AG04450 (cell line): ENCODE measurements at regions of chr19 and their contacts with region 1.

Region 1: DNA sequence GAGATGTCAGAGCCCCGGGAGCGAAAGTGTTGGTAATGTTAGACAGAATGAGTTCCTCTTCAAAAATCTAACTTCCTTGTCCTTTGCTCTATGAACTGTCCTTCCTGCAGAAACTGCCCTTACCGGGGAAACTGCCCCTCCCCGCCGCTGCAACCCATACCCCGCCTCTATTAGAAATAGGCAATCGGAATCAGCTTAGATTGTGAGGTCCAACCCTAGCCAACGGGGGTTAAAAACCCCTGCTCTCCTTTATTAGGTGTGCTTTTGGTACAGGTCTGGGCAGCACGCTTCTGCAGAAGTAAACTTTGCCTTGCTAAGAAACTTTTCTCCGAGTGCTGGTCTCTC is 11.5 kb upstream of the CAPNS1 start:
- DNase-seq: no peak
- H3K4me3 ChIP-seq: peak overlapping the region; percentile 58
- H3K27ac ChIP-seq: peak overlapping the region; percentile 82
- H3K27me3 ChIP-seq: no peaks in the 10 kb centered on the region
- CTCF ChIP-seq: no peak

Region 2: DNA sequence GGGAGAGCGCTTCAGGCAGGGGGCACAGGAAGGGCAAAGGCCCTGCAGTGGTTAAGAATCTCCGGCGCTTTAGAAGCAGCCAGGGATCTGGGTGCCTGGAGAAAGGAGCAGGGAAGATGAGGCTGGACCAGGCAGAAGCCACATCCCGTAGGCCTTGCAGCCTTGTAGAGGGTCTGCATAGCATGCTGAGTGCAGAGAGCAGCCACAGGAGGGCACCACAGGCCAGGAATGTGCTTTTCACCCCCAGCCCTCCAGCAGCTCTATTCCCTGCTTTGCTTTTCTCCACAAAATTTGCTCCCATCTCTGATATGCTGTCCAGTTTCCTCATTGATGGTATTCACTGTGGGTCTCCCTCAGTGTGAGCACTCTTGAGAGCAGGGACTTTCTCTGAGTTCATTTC is 67.9 kb before region 1 on chr19:
- CTCF ChIA-PET with region 1: interaction called, 12 read pairs
- POLR2A ChIA-PET with region 1: no interaction called
- DNase-seq: peak; percentile 29
- H3K4me3 ChIP-seq: no peak overlapping the region
- H3K27ac ChIP-seq: no peak overlapping the region
- H3K27me3 ChIP-seq: no peaks in the 10 kb centered on the region
- CTCF ChIP-seq: peak; percentile 80

Region 3: DNA sequence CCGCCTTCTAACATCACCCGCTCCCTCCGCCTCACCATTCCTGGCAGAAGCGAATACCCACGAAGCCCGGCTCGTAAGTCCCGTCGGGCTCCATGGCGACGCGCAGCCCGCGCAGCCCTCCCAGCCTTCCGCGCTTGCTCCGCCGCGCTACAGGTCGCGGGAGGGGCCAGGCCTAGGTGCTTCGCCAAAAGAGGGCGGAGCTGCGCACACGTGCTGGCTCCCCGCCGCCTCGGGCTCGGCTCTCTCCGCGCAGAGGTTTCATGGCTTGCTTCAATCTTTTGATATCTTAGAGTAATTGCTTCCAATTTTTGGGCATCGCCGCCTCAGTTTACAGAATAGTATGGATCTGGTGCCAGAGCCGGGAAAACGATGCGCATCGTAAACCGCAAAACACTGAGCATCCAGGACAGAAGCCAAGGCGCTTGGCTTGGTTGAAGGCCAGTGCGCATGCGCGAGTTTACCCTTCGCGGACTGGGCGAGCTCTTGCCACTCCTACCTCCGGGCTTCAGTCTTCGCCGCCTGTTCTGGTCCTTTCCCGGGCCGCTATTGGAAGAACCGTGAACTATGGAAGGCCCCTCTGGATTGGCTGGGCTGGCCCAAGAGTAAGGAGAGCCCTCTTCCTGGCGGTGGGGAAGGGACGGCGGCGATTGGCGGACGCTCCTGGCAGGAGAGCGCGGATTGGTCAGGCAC is 13.5 kb before region 1 on chr19 and contains the start of gene POLR2I:
- CTCF ChIA-PET with region 1: interaction called, 7 read pairs
- POLR2A ChIA-PET with region 1: interaction called, 25 read pairs
- DNase-seq: peak; percentile 99
- H3K4me3 ChIP-seq: peak within 1 kb of the TSS; percentile 96
- H3K27ac ChIP-seq: peak within 1 kb of the TSS; percentile 78
- H3K27me3 ChIP-seq: no peaks in the 10 kb centered on the region
- CTCF ChIP-seq: no peak
- polyA plus RNA-seq, gene POLR2I: 37.7 and 62.9 TPM in 2 replicates

Region 4: GRCh38 chr19:36139473-36140303 is 11.3 kb after region 1 on chr19 and contains the start of gene CAPNS1:
- CTCF ChIA-PET with region 1: interaction called, 15 read pairs
- POLR2A ChIA-PET with region 1: interaction called, 21 read pairs
- DNase-seq: peak; percentile 86
- H3K4me3 ChIP-seq: peak within 1 kb of the TSS; percentile 90
- H3K27ac ChIP-seq: peak within 1 kb of the TSS; percentile 96
- H3K27me3 ChIP-seq: peaks cover 2% of the 10 kb centered on the region
- CTCF ChIP-seq: no peak
- polyA plus RNA-seq, gene CAPNS1: 895 and 966 TPM in 2 replicates

Region 5: DNA sequence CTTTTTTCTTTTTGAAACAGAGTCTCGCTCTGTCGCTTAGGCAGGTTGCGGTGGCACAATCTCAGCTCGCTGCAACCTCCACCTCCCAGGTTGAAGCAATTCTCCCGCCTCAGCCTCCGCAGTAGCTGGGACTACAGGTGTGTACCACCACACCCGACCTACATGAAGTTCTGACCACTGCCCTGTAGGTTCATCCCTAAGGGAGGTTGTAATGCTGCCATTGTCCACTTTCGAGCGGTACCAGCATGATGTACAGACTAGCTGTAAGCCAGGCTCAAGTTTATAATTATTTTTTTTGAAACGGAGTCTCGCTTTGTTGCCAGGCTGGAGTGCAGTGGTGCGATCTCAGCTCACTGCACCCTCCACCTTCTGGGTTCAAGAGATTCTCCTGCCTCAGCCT is 35.4 kb after region 1 on chr19:
- CTCF ChIA-PET with region 1: interaction called, 52 read pairs
- POLR2A ChIA-PET with region 1: interaction called, 10 read pairs
- DNase-seq: no peak
- H3K4me3 ChIP-seq: no peak overlapping the region
- H3K27ac ChIP-seq: no peak overlapping the region
- H3K27me3 ChIP-seq: no peaks in the 10 kb centered on the region
- CTCF ChIP-seq: no peak

Region 6: GRCh38 chr19:36169084-36169760 is 40.9 kb after region 1 on chr19:
- CTCF ChIA-PET with region 1: interaction called, 52 read pairs
- POLR2A ChIA-PET with region 1: interaction called, 8 read pairs
- DNase-seq: no peak
- H3K4me3 ChIP-seq: no peak overlapping the region
- H3K27ac ChIP-seq: no peak overlapping the region
- H3K27me3 ChIP-seq: no peaks in the 10 kb centered on the region
- CTCF ChIP-seq: no peak